Mammary epithelial cell (primary cell): ENCODE measurements at regions of chr7 and their contacts with region 1.

Region 1: GRCh38 chr7:142438235-142438922 is 180.5 kb upstream of the PRSS58 start:
- DNase-seq: peak; percentile 37
- H3K4me3 ChIP-seq: no peak overlapping the region
- H3K27ac ChIP-seq: no peak overlapping the region
- H3K4me1 ChIP-seq: peaks cover 19% of the 10 kb centered on the region
- H3K27me3 ChIP-seq: no peaks in the 10 kb centered on the region
- CTCF ChIP-seq: peak; percentile 79 to 97

Region 2: DNA sequence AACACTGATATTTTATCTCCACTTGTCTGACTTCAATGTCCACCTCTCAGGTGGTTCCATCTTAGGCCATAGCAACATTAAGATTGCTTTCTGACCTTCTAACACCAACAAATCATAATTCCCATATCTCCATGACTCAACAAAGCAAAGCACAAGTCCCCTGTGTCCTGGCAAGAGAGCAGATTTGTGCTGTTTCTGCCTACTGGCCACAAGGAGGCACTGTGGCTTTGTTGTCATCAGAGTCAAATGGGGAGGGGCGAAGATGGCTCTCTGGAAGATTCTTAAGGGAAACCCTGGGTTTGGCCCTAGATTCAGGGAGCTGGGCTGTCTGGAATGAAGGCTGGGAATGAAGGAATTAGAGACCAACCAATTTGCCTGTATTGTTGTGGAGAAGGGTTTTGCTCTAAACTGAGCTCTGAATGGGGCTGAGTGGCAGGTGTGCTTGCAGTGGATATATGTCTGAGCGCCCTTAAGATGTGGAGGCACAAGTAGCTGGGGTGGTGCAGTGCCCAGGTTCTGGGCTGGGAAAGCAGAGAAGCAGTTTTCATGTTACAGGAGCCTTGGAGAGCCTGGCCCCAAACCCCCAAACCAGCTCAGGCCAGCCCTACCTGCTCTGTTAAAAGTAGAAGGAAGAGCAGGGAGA is 25.7 kb before region 1 on chr7:
- CTCF ChIA-PET with region 1: interaction called, 3 read pairs
- dilution Hi-C with region 1: no loop called
- in situ Hi-C with region 1: no loop called
- intact Hi-C with region 1: loop called (anchors 2 kb)
- DNase-seq: peak; percentile 61
- H3K4me3 ChIP-seq: no peak overlapping the region
- H3K27ac ChIP-seq: peak overlapping the region; percentile 71
- H3K4me1 ChIP-seq: peaks cover 17% of the 10 kb centered on the region
- H3K27me3 ChIP-seq: no peaks in the 10 kb centered on the region
- CTCF ChIP-seq: peak; percentile 75 to 89

Region 3: DNA sequence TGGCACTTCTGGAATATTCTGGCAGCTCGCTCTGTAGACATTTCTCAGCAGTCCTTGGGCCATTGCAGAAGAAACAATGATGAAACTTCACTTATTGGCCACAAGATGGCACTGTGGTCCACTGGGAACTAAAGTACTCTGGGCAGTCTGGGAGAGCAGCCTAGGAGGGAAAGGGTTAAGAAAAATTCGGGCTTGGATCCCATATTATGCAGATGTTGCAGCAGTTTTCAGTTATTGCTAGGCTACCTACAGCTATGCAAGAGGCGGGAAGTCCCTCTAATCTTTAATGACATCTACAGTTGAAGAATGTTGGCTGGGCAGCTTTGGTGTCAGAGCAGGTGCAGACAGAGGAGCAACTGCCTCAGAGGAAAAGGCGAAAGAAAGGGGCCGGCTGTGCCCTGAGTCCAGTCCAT is 21.2 kb after region 1 on chr7:
- CTCF ChIA-PET with region 1: no interaction called
- dilution Hi-C with region 1: no loop called
- in situ Hi-C with region 1: no loop called
- intact Hi-C with region 1: loop called (anchors 1 kb)
- DNase-seq: peak; percentile 67
- H3K4me3 ChIP-seq: no peak overlapping the region
- H3K27ac ChIP-seq: no peak overlapping the region
- H3K4me1 ChIP-seq: peaks cover 19% of the 10 kb centered on the region
- H3K27me3 ChIP-seq: no peaks in the 10 kb centered on the region
- CTCF ChIP-seq: peak; percentile 70 to 77